PC-3 (cell line): ENCODE measurements at regions of chr15 and their contacts with region 1.

Region 1: GRCh38 chr15:75842722-75843551 is at the start of gene UBE2Q2:
- DNase-seq: peak; percentile 67
- ATAC-seq: peak; percentile 58
- H3K4me3 ChIP-seq: peak within 1 kb of the TSS; percentile 91
- H3K27ac ChIP-seq: peak within 1 kb of the TSS; percentile 42; the same call in 1 of the 2 replicates
- H3K4me1 ChIP-seq: peaks cover 12% of the 10 kb centered on the region
- H3K27me3 ChIP-seq: no peaks in the 10 kb centered on the region
- CTCF ChIP-seq: no peak
- total RNA-seq, gene UBE2Q2: 18.5 and 20.3 TPM in 2 replicates

Region 2: DNA sequence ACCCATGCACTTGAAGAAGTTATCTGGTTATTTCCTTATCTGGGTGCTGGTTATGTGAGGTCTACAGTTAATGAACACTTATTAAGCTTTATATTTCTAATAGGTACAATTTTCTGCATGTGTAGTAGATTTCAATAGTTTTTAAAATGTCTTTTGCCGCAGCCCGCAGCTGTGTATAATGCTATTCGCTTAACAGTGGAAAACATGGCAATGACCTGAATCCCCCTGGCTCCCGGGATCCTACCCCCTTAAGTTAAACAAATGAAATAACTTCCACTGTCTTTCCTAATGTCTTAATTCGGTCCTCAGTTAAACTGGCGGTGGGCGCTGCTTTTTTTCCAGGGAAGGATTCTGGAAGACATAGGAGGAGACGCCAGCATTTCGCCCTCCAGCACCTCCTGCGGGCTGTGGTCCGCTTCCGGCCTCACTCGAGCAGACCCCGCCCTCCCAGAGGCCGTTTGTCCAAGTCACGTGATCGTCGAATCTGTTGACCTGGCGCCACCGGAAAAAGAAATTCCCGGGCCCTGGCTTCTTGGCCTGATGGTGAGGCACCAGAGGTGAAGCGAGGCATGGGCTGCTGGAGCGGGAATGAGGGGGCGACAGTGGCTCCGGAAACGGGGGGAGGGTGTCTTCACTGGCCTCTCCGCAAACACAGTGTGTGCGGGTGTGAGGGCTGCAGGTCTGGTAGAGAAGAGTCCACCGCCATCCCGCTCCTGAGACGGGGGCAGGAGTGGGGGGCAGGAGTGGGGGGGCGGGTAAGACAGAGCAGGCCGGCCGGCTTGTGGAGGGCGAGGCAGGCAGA is 84.7 kb before region 1 on chr15:
- CTCF ChIA-PET with region 1: no interaction called
- POLR2A ChIA-PET with region 1: no interaction called
- intact Hi-C with region 1: no loop called
- DNase-seq: peak; percentile 64
- ATAC-seq: peak; percentile 58
- H3K4me3 ChIP-seq: peak overlapping the region; percentile 60
- H3K27ac ChIP-seq: no peak overlapping the region
- H3K4me1 ChIP-seq: no peaks in the 10 kb centered on the region; the same call in 1 of the 2 replicates
- H3K27me3 ChIP-seq: no peaks in the 10 kb centered on the region
- CTCF ChIP-seq: 0 out of 2 replicates have a peak, but pooled peaks have one; percentile 14

Region 3: GRCh38 chr15:75884041-75884440 is 41.1 kb after region 1 on chr15:
- CTCF ChIA-PET with region 1: no interaction called
- POLR2A ChIA-PET with region 1: no interaction called
- intact Hi-C with region 1: loop called (anchors 5 kb)
- DNase-seq: peak; percentile 15
- ATAC-seq: no peak
- H3K4me3 ChIP-seq: no peak overlapping the region
- H3K27ac ChIP-seq: no peak overlapping the region
- H3K4me1 ChIP-seq: peaks cover 4% of the 10 kb centered on the region; the same call in 1 of the 2 replicates
- H3K27me3 ChIP-seq: no peaks in the 10 kb centered on the region
- CTCF ChIP-seq: no peak

Region 4: DNA sequence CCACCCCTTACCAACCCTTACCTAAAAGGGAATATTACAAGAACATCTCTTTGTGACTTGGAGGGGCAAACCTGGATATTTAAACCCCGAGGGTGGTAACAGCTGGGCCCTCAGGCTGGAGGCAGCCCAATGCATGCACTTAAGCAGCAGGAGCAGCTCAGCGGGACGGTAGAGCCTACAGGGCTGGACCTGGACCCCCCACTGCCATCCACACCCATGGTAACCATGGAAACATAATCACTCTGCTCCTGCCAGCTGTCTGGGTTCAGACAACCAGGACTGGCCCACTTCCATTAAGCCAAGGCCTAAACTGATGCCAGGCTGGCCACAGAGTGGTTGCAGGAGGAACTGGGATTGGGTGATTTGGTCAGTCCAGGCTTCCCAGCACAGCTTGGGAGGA is 415.5 kb after region 1 on chr15:
- CTCF ChIA-PET with region 1: no interaction called
- POLR2A ChIA-PET with region 1: no interaction called
- intact Hi-C with region 1: no loop called
- DNase-seq: no peak
- ATAC-seq: no peak
- H3K4me3 ChIP-seq: no peak overlapping the region
- H3K27ac ChIP-seq: no peak overlapping the region
- H3K4me1 ChIP-seq: no peaks in the 10 kb centered on the region
- H3K27me3 ChIP-seq: no peaks in the 10 kb centered on the region
- CTCF ChIP-seq: no peak